ENCODE measurements at regions of chr15 and their contacts with region 1.

Region 1: GRCh38 chr15:38072348-38073177 is 138.1 kb downstream of the TMCO5A start:
- DNase-seq: peak in 1 of 2 donors; percentile 83
- H3K4me3 ChIP-seq: peak overlapping the region; percentile 56 to 79
- H3K27ac ChIP-seq: peak overlapping the region; percentile 94 to 95
- H3K4me1 ChIP-seq: peaks cover 0 to 22% of the 10 kb centered on the region in 2 donors
- H3K27me3 ChIP-seq: no peaks in the 10 kb centered on the region
- CTCF ChIP-seq: peak in 1 of 3 experiments; percentile 28

Region 2: DNA sequence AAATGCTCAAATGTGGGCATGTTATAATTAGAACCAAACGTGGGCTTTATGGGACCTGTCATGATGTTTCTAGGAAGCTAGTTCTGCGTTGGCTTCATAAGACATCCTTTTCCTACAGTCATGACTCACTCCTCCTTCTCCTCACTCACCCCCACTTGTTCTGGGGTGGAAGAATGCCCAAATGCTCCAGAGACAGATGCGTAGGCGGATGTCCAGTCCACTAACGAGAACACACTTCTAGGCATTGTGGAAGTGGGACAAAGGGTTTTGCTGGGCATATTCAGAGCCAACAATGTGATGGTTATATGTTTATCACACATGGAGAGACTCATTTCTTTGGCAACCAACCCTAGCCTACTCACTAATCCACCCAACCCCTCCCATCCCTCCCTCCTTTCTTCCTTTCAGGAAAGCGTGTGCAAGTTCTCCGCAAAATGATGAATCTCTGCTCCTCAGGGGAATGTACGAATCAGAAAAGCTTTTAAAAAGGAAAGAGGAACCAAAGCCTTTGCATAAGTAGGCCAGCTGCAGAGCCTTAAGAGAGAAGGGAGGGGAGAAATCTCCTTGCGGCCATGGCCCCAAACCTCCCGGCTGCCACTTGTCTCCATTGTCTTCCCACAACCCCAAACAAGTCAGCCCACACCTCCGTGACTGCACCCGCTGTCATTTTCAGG is 57.1 kb after region 1 on chr15:
- intact Hi-C with region 1: loop called (anchors 5 kb)
- DNase-seq: peak; percentile 65 to 93
- H3K4me3 ChIP-seq: peak overlapping the region; percentile 21 to 45
- H3K27ac ChIP-seq: peak overlapping the region; percentile 63 to 65
- H3K4me1 ChIP-seq: peaks cover 0 to 5% of the 10 kb centered on the region in 2 donors
- H3K27me3 ChIP-seq: no peaks in the 10 kb centered on the region
- CTCF ChIP-seq: no peak

Region 3: DNA sequence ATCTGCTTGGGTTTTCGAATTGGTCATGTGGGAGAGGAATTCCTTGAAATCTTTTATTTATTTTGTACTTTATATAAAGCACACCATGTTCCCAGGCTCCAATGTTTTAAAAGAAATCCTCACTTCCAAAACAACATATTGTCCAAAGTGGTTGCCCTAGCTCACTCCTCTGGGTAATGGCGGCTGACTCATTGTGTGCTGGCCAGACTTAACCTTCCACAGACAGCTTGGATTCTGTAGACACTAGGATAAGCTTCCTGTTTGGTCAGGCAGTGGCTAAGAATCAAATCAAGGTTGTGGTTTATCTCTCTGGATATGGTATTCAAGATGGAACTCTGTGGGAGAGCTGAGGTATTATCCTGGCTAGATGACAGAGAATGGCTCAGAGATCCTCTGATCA is 325.6 kb after region 1 on chr15:
- intact Hi-C with region 1: loop called (anchors 5 kb)
- DNase-seq: peak; percentile 20 to 83
- H3K4me3 ChIP-seq: no peak overlapping the region
- H3K27ac ChIP-seq: peak overlapping the region; percentile 44 to 65
- H3K4me1 ChIP-seq: peaks cover 3 to 16% of the 10 kb centered on the region in 2 donors
- H3K27me3 ChIP-seq: no peaks in the 10 kb centered on the region
- CTCF ChIP-seq: no peak